Left cardiac atrium (tissue), 4 donors: ENCODE measurements at regions of chr16 and their contacts with region 1.

Region 1: GRCh38 chr16:24253192-24253591 is 2.9 kb upstream of the CACNG3 start:
- DNase-seq: peak; percentile 34
- ATAC-seq: peak in 1 of 2 donors; percentile 63

Region 2: DNA sequence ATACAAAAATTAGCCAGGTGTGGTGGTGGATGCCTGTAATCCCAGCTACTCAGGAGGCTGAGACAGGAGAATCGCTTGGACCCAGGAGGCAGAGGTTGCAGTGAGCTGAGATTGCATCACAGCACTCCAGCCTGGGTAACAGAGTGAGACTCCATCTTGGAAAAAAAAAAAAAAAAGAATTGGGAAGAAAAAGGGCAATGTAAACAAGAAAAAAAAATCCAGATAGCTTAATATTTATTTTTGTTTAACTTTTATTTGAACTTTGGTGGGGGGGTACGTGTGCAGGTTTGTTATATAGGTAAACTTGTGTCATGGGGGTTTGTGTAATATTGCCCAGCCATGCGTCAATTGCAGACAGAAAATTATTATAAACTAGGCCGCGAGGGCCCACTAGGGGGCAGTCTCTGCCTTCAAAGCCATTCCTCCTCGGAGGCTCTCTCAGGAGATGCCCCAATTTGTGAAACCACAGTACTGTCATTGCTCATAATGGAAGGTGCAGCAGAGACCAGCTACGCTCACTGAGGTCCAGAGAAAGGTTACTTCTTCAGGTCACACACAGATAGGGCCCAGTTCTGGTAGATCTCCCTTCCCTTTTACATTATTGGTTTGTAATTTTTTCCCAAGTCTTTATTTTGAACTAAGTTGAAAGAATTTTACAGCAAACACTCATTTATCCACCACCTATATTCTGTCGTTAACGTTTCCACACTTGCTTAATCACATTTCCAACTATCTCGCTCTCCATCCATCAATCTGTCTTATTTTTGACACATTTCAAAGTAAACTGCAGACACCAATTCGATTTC is 211.2 kb before region 1 on chr16:
- intact Hi-C with region 1: loop called in 1 of 2 experiments (anchors 5 kb)
- DNase-seq: peak; percentile 53
- ATAC-seq: peak; percentile 41 to 70

Region 3: DNA sequence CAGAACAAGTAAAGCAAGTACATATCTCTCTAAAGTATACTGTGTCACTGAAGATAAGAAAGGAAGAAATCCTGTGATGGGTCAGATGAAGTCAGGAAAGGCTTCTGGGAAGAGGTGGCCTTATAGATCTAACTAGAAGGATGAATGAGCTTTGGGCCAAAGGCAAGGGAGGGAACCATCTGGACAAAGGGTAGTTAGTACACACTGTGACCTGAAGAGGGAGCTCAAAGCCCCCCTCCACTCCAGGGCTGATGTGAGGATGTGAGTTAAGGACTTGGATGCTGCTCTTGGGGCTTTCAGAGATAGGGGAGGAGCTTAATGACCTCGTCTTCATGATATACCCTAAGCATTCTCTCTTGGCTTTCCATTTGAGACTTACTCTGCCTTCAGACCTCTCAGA is 182.3 kb before region 1 on chr16:
- intact Hi-C with region 1: loop called (anchors 5 to 10 kb)
- DNase-seq: peak; percentile 21
- ATAC-seq: peak in 1 of 2 donors; percentile 63

Region 4: DNA sequence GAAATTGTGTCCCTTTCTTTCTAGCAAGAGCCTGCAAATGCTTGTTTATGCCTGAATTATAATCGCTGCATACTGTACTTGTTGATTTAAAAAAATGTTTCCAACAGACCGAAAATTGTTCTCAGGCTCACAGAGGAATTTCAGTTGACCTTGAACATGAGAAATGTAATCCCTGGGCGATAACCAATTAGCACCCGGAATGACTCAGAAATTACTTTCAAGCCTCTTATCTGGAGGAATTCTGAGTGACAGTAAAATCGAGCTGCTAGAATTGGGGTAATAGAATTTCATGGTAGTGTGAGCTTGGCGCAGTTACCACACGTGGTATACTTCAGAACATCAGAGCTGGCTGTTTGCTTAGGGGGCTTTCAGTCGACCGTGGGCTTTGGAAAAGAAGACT is 136.2 kb before region 1 on chr16:
- intact Hi-C with region 1: loop called in 1 of 2 experiments (anchors 10 kb)
- DNase-seq: no peak
- ATAC-seq: peak; percentile 45 to 75

Region 5: GRCh38 chr16:24499193-24499814 is 246.1 kb after region 1 on chr16:
- intact Hi-C with region 1: loop called in 1 of 2 experiments (anchors 10 kb)
- DNase-seq: no peak
- ATAC-seq: no peak